ENCODE measurements at regions of chr4 and their contacts with region 1.

Region 1: GRCh38 chr4:176340871-176341685 is 21.3 kb downstream of the SPCS3 start:
- DNase-seq: no peak
- H3K4me3 Mint-ChIP-seq: no peak overlapping the region
- H3K27ac Mint-ChIP-seq: no peak overlapping the region
- H3K4me1 Mint-ChIP-seq: no peaks in the 10 kb centered on the region
- H3K27me3 Mint-ChIP-seq: no peaks in the 10 kb centered on the region

Region 2: GRCh38 chr4:174764105-174764729 is 1576.9 kb before region 1 on chr4:
- intact Hi-C with region 1: loop called (anchors 10 kb)
- DNase-seq: no peak
- H3K4me3 Mint-ChIP-seq: no peak overlapping the region
- H3K27ac Mint-ChIP-seq: no peak overlapping the region
- H3K4me1 Mint-ChIP-seq: no peaks in the 10 kb centered on the region
- H3K27me3 Mint-ChIP-seq: no peaks in the 10 kb centered on the region

Region 3: GRCh38 chr4:175947117-175947722 is 393.9 kb before region 1 on chr4:
- intact Hi-C with region 1: loop called (anchors 1 kb)
- DNase-seq: no peak
- H3K4me3 Mint-ChIP-seq: no peak overlapping the region
- H3K27ac Mint-ChIP-seq: no peak overlapping the region
- H3K4me1 Mint-ChIP-seq: peaks cover 8% of the 10 kb centered on the region
- H3K27me3 Mint-ChIP-seq: peaks cover 9% of the 10 kb centered on the region

Region 4: DNA sequence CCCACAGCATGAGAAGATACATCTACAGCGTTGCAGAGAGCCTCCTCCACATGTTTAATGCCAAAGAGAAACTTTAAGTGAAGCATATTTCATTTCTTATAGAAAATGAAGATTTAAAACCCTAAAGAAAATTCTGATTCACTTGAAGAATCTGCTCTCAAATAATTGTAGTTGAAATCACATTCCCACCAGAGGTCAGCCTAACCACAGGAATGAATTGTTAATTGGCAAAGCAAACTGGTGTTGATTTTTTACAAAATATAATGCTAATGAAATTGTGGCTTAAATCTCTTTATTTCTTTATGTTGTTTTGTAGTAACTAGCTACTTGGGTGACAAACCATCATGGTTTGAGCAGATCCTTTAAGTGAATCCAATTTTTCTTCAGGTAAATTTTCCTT is 306.6 kb before region 1 on chr4:
- intact Hi-C with region 1: loop called (anchors 1 kb)
- DNase-seq: no peak
- H3K4me3 Mint-ChIP-seq: no peak overlapping the region
- H3K27ac Mint-ChIP-seq: no peak overlapping the region
- H3K4me1 Mint-ChIP-seq: no peaks in the 10 kb centered on the region
- H3K27me3 Mint-ChIP-seq: no peaks in the 10 kb centered on the region

Region 5: DNA sequence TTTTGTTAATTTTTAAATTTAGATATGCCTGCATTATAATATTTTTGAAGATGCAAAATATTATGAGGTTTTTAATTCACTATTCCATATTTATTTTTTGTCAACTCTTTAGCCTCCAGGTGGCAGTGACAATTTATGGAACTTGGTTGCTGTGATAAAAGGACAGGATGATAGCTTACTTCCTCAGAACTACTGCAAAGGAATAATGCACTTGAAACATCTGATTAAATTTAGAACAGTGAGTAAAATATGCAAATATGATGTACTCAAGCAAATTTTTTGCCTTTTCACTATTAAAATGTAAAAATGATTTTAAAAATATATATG is 190.8 kb before region 1 on chr4:
- intact Hi-C with region 1: loop called (anchors 1 kb)
- DNase-seq: no peak
- H3K4me3 Mint-ChIP-seq: no peak overlapping the region
- H3K27ac Mint-ChIP-seq: no peak overlapping the region
- H3K4me1 Mint-ChIP-seq: no peaks in the 10 kb centered on the region
- H3K27me3 Mint-ChIP-seq: no peaks in the 10 kb centered on the region

Region 6: DNA sequence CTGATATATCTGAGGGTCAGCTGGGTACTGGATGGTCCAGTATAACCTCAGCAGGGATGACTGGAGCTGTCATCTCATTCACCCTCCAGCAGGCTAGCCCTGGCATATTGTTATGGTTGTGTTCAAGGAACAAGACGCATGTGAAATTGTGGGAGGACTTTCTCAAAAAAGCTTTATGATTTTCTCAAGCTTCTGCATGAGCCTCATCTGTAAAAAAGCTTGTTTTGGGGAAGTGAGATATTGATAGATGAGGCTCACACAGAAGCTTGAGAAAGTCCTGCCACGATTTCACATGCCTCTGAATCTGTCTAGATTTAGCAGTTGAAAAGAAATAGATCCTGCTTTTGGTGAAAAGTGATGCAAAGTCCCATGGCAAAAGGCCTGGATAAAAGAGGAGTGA is 72.1 kb after region 1 on chr4:
- intact Hi-C with region 1: no loop called
- DNase-seq: no peak
- H3K4me3 Mint-ChIP-seq: no peak overlapping the region
- H3K27ac Mint-ChIP-seq: no peak overlapping the region
- H3K4me1 Mint-ChIP-seq: no peaks in the 10 kb centered on the region
- H3K27me3 Mint-ChIP-seq: no peaks in the 10 kb centered on the region